Dorsolateral prefrontal cortex (tissue), 120 donors: ENCODE measurements at regions of chr1 and their contacts with region 1.

Region 1: GRCh38 chr1:228165372-228166169 is at the start of gene IBA57:
- DNase-seq: peak; percentile 97 to 100 (median 99)
- H3K4me3 ChIP-seq: peak within 1 kb of the TSS; percentile 70 to 99 (median 87)
- H3K27ac ChIP-seq: peak within 1 kb of the TSS; percentile 79 to 100 (median 99)
- H3K27me3 ChIP-seq: peaks cover 0 to 8% (median 0%) of the 10 kb centered on the region in 45 donors
- CTCF ChIP-seq: peak; percentile 53 to 96 (median 77)
- total RNA-seq, gene IBA57: 6.6 to 16.0 (median 9.7) TPM

Region 2: GRCh38 chr1:228043281-228043890 is 122.2 kb before region 1 on chr1:
- intact Hi-C with region 1: no loop called
- DNase-seq: peak in 5 of 10 donors; percentile 2 to 8 (median 6)
- H3K4me3 ChIP-seq: no peak overlapping the region
- H3K27ac ChIP-seq: no peak overlapping the region
- H3K27me3 ChIP-seq: peaks cover 0 to 27% (median 12%) of the 10 kb centered on the region in 45 donors
- CTCF ChIP-seq: no peak

Region 3: GRCh38 chr1:228082135-228082891 is 83.3 kb before region 1 on chr1 and contains the start of gene ARF1:
- intact Hi-C with region 1: loop called (anchors 2 kb)
- DNase-seq: peak; percentile 79 to 95 (median 90)
- H3K4me3 ChIP-seq: peak within 1 kb of the TSS; percentile 64 to 100 (median 99)
- H3K27ac ChIP-seq: peak within 1 kb of the TSS; percentile 66 to 99 (median 96)
- H3K27me3 ChIP-seq: no peaks in the 10 kb centered on the region
- CTCF ChIP-seq: peak in 49 of 56 donors; percentile 10 to 71 (median 47)
- total RNA-seq, gene ARF1: 206 to 403 (median 322) TPM

Region 4: DNA sequence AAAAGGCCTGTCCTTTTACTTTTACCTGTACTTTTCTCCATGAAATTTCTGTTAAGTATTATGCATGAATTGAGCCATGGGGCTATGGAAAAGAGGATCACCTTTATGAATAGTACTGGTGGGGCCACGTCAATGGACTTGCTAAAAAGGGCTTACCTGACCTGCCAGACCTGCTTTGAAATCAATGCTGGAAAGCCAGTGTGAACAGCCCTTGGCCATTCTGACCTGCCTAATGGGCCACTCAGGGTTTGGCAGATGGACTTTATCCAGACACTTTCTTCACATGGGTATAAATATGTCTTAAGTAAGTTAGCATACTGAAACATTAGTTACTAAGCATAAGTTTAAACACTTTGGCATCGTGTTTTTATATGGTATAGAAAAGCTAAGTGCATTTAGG is 33.8 kb before region 1 on chr1:
- intact Hi-C with region 1: loop called in 1 of 2 experiments (anchors 1 kb)
- DNase-seq: no peak
- H3K4me3 ChIP-seq: no peak overlapping the region
- H3K27ac ChIP-seq: no peak overlapping the region
- H3K27me3 ChIP-seq: peaks cover 0 to 10% (median 0%) of the 10 kb centered on the region in 45 donors
- CTCF ChIP-seq: no peak

Region 5: GRCh38 chr1:228150461-228151179 is 15.0 kb before region 1 on chr1:
- intact Hi-C with region 1: loop called in 1 of 2 experiments (anchors 1 kb)
- DNase-seq: peak in 9 of 10 donors; percentile 43 to 83 (median 68)
- H3K4me3 ChIP-seq: peak overlapping the region; percentile 14 to 76 (median 54)
- H3K27ac ChIP-seq: peak overlapping the region; percentile 61 to 98 (median 93)
- H3K27me3 ChIP-seq: no peaks in the 10 kb centered on the region
- CTCF ChIP-seq: no peak

Region 6: DNA sequence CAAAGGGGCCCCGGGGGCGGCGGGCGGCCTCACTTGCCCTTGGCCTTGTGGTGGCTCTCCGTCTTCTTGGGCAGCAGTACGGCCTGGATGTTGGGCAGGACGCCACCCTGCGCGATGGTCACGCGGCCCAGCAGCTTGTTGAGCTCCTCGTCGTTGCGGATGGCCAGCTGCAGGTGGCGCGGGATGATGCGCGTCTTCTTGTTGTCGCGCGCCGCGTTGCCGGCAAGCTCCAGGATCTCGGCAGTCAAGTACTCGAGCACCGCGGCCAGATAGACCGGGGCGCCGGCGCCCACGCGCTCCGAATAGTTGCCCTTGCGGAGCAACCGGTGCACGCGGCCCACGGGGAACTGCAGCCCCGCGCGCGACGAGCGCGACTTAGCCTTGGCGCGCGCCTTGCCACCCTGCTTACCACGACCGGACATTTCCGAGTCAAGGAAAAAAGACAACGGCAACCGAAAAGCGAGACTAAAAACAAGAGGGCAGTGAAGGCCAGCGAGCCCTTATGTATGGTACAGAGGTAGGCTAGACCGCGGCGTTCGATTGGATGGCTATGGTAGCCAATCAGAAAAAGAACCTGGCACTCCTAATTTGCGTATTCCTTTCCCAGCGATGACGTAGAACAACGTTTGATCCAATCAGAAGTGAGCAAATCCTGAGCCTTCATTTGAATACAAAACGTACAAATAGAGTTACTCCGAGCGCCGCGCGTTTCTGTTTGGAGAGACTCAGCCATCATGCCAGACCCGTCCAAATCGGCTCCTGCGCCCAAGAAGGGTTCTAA is 292.0 kb after region 1 on chr1:
- intact Hi-C with region 1: loop called in 1 of 2 experiments (anchors 5 kb)
- DNase-seq: peak; percentile 72 to 98 (median 92)
- H3K4me3 ChIP-seq: peak overlapping the region; percentile 49 to 84 (median 71)
- H3K27ac ChIP-seq: peak overlapping the region; percentile 71 to 97 (median 90)
- H3K27me3 ChIP-seq: peaks cover 0 to 43% (median 7%) of the 10 kb centered on the region in 45 donors
- CTCF ChIP-seq: peak in 33 of 56 donors; percentile 6 to 48 (median 32)